ENCODE measurements at regions of chr3 and their contacts with region 1.

Region 1: DNA sequence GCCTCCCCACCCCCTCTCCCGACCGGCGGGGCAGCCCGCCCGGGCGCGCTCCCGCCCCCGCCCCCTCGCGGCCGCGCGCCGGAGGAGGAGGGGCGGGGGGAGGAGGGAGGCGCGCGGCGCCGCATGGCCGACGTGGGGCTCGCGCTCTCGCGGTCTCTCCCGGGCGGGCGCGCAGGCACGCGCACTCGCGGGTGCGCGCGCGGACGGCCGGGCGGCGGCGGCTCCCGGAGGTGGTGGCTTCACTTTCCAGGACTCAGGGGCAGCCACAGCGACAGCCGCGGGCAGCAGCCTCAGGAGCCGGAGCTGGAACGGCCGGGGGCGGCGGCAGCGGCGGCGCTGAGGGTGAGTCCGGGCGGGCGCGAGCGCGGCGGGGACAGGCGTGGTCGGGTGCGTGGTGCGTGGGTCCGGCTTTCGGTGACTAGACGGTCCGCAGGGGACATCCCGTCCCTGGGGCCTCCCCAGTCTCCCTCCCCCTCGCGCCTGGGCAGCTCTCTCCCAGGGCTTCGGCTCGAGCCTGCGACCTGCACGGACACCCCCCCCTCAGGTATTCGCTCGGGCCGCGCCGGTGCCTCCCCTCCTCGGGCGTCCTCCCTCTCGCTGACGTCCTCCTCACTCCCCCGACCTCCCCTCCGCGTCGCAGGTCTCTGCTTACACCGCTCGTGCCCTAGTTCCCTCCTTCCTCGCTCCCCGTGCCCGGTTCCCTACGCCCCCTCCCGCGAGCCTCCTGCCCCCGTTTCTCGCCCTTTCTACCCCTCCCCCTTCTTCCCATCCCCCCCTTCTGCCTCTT is at the start of gene UBE2E2:
- DNase-seq: no peak
- ATAC-seq: peak; percentile 77
- H3K4me3 ChIP-seq: peak within 1 kb of the TSS; percentile 92
- H3K27ac ChIP-seq: peak within 1 kb of the TSS; percentile 59
- H3K4me1 ChIP-seq: no peaks in the 10 kb centered on the region
- H3K27me3 ChIP-seq: no peaks in the 10 kb centered on the region
- CTCF ChIP-seq: no peak
- EP300 ChIP-seq: peak in 1 of 2 experiments; percentile 22; a peak in 1 of 4 replicates
- POLR2A ChIP-seq: peak; percentile 75
- RAD21 ChIP-seq: peak; percentile 22; the same call in 1 of the 2 replicates
- polyA plus RNA-seq, gene UBE2E2: 8.7 to 15.0 TPM

Region 2: GRCh38 chr3:22960105-22960984 is 242.8 kb before region 1 on chr3:
- CTCF ChIA-PET with region 1: no interaction called
- POLR2A ChIA-PET with region 1: no interaction called
- RAD21 ChIA-PET with region 1: no interaction called
- SMC1A ChIA-PET with region 1: no interaction called
- in situ Hi-C with region 1: no loop called
- intact Hi-C with region 1: loop called (anchors 5 kb)
- DNase-seq: no peak
- ATAC-seq: peak; percentile 73
- H3K4me3 ChIP-seq: no peak overlapping the region
- H3K27ac ChIP-seq: no peak overlapping the region
- H3K4me1 ChIP-seq: peaks cover 11% of the 10 kb centered on the region; the same call in 1 of the 2 replicates
- H3K27me3 ChIP-seq: no peaks in the 10 kb centered on the region
- CTCF ChIP-seq: peak; percentile 63 to 76 (median 74)
- EP300 ChIP-seq: no peak
- POLR2A ChIP-seq: no peak
- RAD21 ChIP-seq: peak; percentile 83

Region 3: GRCh38 chr3:23161896-23162570 is 41.1 kb before region 1 on chr3:
- CTCF ChIA-PET with region 1: no interaction called
- POLR2A ChIA-PET with region 1: no interaction called
- RAD21 ChIA-PET with region 1: interaction called, 5 read pairs
- SMC1A ChIA-PET with region 1: interaction called, 4 read pairs
- in situ Hi-C with region 1: no loop called
- intact Hi-C with region 1: loop called (anchors 2 kb)
- DNase-seq: peak; percentile 69
- ATAC-seq: peak; percentile 74
- H3K4me3 ChIP-seq: peak overlapping the region; percentile 19; the same call in 1 of the 2 replicates
- H3K27ac ChIP-seq: peak overlapping the region; percentile 66
- H3K4me1 ChIP-seq: peaks cover 37% of the 10 kb centered on the region
- H3K27me3 ChIP-seq: no peaks in the 10 kb centered on the region
- CTCF ChIP-seq: no peak
- EP300 ChIP-seq: peak in 1 of 2 experiments; percentile 28; a peak in 2 of 4 replicates
- POLR2A ChIP-seq: no peak
- RAD21 ChIP-seq: no peak

Region 4: GRCh38 chr3:23219117-23219516 is 16.0 kb after region 1 on chr3:
- CTCF ChIA-PET with region 1: interaction called, 5 read pairs
- POLR2A ChIA-PET with region 1: interaction called, 5 read pairs
- RAD21 ChIA-PET with region 1: interaction called, 29 read pairs
- SMC1A ChIA-PET with region 1: interaction called, 12 read pairs
- in situ Hi-C with region 1: no loop called
- intact Hi-C with region 1: no loop called
- DNase-seq: no peak
- ATAC-seq: peak; percentile 70
- H3K4me3 ChIP-seq: no peak overlapping the region
- H3K27ac ChIP-seq: peak overlapping the region; percentile 41; the same call in 1 of the 2 replicates
- H3K4me1 ChIP-seq: peaks cover 36% of the 10 kb centered on the region
- H3K27me3 ChIP-seq: no peaks in the 10 kb centered on the region
- CTCF ChIP-seq: no peak
- EP300 ChIP-seq: no peak
- POLR2A ChIP-seq: no peak
- RAD21 ChIP-seq: no peak

Region 5: DNA sequence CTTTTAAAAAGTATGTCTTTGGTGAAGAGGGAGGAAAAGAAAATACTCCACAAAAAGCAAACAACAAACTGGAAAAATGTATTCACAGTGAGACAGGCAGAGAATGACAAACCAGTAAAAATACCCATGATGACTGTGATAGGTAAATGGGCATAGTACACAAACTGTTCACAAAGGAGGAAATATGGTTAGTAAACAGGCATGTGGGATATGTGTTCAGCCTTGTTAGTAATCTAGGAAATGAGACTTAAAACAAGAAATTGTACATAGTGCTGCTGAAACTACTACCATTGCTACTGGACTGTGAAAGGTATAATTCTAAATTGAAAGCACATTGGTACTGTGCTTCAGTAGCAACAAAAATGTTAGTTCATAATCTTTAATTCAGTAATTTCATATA is 50.1 kb after region 1 on chr3:
- CTCF ChIA-PET with region 1: interaction called, 5 read pairs
- POLR2A ChIA-PET with region 1: interaction called, 3 read pairs
- RAD21 ChIA-PET with region 1: interaction called, 4 read pairs
- SMC1A ChIA-PET with region 1: interaction called, 20 read pairs
- in situ Hi-C with region 1: no loop called
- intact Hi-C with region 1: no loop called
- DNase-seq: peak; percentile 48
- ATAC-seq: peak; percentile 89
- H3K4me3 ChIP-seq: 0 out of 2 replicates have a peak overlapping the region, but pooled peaks have one; percentile 15
- H3K27ac ChIP-seq: peak overlapping the region; percentile 20; the same call in 1 of the 2 replicates
- H3K4me1 ChIP-seq: peaks cover 7% of the 10 kb centered on the region; the same call in 1 of the 2 replicates
- H3K27me3 ChIP-seq: no peaks in the 10 kb centered on the region
- CTCF ChIP-seq: no peak
- EP300 ChIP-seq: no peak
- POLR2A ChIP-seq: no peak
- RAD21 ChIP-seq: no peak

Region 6: DNA sequence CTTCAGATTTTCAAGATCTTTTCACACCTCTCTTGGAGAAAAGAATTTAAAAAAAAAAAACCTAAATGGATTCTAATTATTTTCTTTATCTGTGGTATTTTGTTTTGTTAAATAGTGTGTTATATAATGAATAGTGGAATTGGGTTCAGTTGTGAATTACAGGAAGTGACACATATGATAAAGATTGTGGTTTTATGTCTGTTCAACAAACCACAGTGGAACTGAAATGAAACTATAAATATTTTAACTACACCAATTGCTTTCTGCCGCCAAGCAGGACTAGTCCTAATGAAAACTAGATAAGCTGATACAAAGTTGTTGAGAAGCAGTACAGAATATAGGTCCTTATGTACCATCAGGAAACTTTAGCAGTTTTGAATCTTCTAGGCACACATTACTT is 121.6 kb after region 1 on chr3:
- CTCF ChIA-PET with region 1: no interaction called
- POLR2A ChIA-PET with region 1: no interaction called
- RAD21 ChIA-PET with region 1: no interaction called
- SMC1A ChIA-PET with region 1: interaction called, 6 read pairs
- in situ Hi-C with region 1: no loop called
- intact Hi-C with region 1: loop called (anchors 5 kb)
- DNase-seq: peak; percentile 12
- ATAC-seq: peak; percentile 80
- H3K4me3 ChIP-seq: no peak overlapping the region
- H3K27ac ChIP-seq: no peak overlapping the region
- H3K4me1 ChIP-seq: peaks cover 10% of the 10 kb centered on the region
- H3K27me3 ChIP-seq: no peaks in the 10 kb centered on the region
- CTCF ChIP-seq: no peak
- EP300 ChIP-seq: no peak
- POLR2A ChIP-seq: no peak
- RAD21 ChIP-seq: no peak

Region 7: DNA sequence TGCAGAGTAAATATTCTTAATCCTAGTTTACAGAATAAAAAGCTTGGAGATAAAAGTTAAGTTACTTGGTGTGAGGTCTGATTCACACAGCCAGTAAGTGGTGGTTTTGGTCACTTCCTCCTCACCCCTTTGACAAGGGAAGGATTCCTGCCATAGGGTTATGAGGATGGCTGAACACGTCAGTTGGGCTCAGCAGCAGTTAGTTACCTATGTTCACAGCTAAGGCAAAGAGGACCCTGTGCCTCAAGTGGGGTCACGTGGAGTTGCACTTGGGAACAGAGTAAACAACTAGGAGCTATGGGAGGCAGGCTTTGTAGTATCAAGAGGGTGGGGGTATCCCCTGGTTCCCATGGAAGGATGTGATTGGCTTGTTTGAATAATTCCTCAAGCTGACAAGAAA is 232.2 kb after region 1 on chr3:
- CTCF ChIA-PET with region 1: no interaction called
- POLR2A ChIA-PET with region 1: no interaction called
- RAD21 ChIA-PET with region 1: interaction called, 3 read pairs
- SMC1A ChIA-PET with region 1: interaction called, 3 read pairs
- in situ Hi-C with region 1: no loop called
- intact Hi-C with region 1: loop called (anchors 5 kb)
- DNase-seq: no peak
- ATAC-seq: no peak; the same call in 1 of the 3 replicates
- H3K4me3 ChIP-seq: no peak overlapping the region
- H3K27ac ChIP-seq: no peak overlapping the region
- H3K4me1 ChIP-seq: peaks cover 12% of the 10 kb centered on the region
- H3K27me3 ChIP-seq: no peaks in the 10 kb centered on the region
- CTCF ChIP-seq: no peak
- EP300 ChIP-seq: no peak
- POLR2A ChIP-seq: no peak
- RAD21 ChIP-seq: no peak

Measured in GM12878 (cell line).